Right ventricle myocardium superior (tissue), 1 donor: ENCODE measurements at regions of chr10 and their contacts with region 1.

Region 1: DNA sequence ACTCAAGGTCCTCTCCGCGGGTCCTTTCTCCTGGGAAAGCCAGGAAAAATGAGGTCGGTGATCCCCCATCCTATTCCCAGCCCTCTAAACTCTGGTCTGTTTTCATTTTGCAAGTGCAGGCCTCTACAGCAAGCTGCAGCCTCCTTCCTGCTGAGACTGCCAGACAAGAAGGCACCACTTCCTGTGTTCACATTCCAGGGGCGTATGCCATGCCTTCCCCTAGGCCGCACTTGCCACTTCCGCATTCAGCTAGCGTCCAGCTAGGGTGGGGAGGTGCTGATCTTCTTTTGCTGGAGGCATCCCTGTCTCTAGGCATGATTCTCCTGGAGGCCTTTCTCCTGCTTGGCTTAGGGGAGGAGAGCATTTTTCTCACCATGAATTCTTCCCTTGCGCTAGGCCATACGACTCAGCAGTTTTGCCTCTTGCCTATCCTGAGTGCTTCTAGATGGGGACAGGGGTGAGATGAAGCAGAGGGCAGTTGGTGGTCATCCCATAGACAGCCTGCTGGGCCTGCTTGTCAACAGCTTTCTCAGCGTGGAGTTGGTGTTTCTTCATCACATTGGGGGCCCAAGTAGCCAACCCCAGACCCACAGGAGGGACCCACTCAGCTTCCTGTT is 328.9 kb downstream of the RPS24 start:
- DNase-seq: peak; percentile 61
- ATAC-seq: peak; percentile 49

Region 2: GRCh38 chr10:78292982-78293865 is 69.3 kb before region 1 on chr10:
- intact Hi-C with region 1: no loop called
- DNase-seq: no peak
- ATAC-seq: no peak

Region 3: DNA sequence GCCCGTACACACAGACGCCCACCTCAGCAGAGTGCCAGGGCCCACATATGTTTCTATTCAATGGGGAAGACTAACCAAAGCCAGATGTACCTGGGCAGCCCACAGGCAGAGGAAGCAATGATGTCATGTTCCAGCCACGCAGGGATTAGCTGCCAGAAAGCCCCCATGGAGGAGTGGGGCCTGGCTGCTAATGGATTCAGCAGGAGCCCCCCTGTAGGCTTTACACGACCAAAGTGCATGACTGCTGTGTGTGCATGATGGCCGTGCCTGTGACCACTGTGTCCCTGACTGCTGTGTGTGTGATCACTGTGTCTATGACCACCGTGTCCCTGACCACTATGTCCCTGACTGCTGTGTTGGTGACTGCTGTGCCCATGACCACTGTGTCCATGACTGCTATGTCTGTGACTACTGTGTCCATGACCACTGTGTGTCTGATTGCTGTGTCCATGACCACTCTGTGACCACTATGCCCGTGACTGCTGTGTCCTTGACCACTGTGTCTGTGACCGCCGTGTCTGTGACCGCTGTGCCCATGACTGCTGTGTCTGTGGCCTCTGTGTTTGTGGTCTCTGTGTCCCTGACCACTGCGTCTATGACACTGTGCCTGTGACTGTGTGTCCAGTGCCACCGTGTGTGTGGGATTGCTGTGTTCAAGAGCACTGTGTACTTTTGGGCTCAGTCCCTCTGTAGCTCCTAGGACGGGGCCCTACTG is 80.5 kb after region 1 on chr10:
- intact Hi-C with region 1: loop called (anchors 10 kb)
- DNase-seq: no peak
- ATAC-seq: no peak

Region 4: GRCh38 chr10:78657163-78657861 is 294.8 kb after region 1 on chr10:
- intact Hi-C with region 1: no loop called
- DNase-seq: peak; percentile 78
- ATAC-seq: peak; percentile 97